ENCODE measurements at regions of chr1 and their contacts with region 1.

Region 1: DNA sequence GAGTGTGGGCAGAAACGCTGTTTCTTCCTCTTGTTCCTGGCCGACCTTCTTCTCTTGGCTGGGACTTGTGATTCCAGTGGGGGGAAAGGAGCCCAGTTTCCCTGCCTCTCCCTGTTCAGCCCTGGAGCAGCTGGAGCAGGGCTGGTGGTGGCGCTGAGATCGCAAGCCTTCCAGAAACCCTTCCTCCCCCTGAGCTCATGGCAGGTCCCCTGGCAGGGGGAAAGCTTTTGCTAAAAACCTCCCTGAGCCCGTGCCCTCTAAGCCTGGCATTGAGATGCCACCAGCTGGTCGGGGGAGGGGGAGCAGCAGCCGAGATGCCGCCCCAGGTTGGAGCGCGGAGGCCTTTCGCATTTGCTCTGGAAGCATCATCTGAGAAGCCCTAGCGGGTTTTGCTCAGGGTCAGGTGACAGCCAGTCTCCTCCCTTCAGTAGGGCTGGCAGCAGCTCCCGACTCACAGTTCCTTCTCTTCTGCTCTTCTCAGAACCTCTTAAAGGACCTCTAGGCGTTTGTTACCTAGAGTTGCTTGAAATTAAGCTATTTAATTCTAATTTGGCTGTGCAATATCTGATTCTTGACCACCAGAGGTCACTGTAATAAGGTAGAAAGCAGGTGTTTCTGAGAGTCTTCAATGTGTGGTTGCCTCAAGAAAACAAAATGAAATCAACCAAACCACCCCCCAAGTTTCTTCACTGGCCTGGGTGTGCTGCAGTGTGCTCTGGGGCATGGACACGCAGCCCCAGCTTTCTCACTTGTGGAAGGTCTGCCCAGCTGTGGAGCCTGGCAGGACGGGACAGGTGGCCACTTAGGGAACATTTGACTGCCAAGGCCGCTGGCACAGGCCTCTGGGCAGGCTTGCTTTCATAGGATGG is 257.3 kb downstream of the CAMTA1 start:
- DNase-seq: no peak
- H3K4me3 Mint-ChIP-seq: no peak overlapping the region
- H3K27ac Mint-ChIP-seq: no peak overlapping the region
- H3K4me1 Mint-ChIP-seq: no peaks in the 10 kb centered on the region
- H3K27me3 Mint-ChIP-seq: no peaks in the 10 kb centered on the region

Region 2: DNA sequence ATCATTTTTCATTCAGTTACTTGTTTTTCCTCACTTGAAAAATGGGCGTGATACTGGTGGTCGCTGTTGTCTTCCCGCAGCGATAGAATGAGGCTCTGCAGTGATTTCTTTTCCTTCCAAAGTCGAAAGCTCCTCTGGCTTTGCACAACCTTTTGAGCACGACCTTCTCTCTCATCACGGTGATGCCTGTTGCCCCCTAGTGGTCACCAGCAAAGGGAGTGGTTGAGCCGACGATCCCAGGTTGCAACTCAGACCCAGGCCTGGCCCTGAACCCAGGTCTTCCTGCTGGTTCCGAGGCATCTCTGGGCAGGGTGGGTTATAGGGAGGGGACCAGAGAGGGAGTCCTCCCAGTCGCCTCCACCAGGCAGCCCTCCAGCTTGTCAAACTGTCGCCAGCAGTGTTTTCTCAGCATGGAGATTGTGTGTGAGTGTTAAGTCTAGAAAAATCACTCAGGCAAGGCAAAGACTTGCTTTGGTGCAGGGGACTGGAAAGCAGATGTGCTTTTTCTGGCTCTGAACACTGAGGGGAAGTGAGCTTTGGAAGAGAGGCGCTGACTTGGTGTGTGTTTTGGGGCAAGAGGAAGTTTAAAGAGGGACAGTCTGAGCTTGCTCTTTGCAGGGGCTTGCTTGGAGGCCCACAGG is 28.0 kb after region 1 on chr1:
- CTCF ChIA-PET with region 1: interaction called, 11 read pairs
- POLR2A ChIA-PET with region 1: no interaction called
- DNase-seq: peak; percentile 48
- H3K4me3 Mint-ChIP-seq: no peak overlapping the region
- H3K27ac Mint-ChIP-seq: no peak overlapping the region
- H3K4me1 Mint-ChIP-seq: no peaks in the 10 kb centered on the region
- H3K27me3 Mint-ChIP-seq: peaks cover 5% of the 10 kb centered on the region

Region 3: DNA sequence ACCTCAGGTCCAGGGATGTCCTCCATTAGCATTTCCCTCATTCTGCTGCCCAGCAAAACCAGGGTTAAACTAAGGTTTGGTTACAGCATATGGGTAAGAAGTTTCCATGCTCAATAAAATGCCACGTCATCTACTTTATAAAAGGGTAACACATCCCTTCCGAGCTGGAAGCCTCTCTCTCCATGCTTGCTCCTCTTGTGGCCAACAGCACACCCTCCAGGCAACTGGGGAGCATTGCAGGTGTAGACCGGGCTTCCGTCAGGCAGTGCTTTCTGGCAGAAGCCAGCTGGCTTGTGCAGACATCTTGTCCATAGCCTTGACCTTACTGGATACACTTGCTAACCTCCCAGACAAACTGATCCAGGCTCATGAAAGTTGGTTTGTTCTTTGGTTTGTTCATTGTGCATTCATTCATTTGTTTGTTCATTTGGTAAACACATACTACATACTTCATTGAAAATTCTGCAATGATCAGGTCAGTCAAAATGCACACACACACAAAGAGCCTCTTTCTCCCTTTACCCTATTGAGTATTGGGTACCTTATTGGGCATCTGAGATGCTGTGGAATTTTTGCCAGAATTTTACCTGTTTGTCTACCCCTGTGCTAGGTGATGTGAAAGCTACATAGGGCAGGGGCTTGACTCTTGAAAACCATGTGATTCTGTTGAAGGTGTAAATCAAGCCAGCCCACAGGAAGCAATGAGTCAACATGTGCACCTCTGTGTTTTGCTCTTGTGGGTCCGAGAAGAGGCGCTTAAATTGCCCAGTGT is 165.5 kb after region 1 on chr1:
- CTCF ChIA-PET with region 1: interaction called, 15 read pairs
- POLR2A ChIA-PET with region 1: no interaction called
- DNase-seq: peak; percentile 35
- H3K4me3 Mint-ChIP-seq: no peak overlapping the region
- H3K27ac Mint-ChIP-seq: no peak overlapping the region
- H3K4me1 Mint-ChIP-seq: no peaks in the 10 kb centered on the region
- H3K27me3 Mint-ChIP-seq: peaks cover 20% of the 10 kb centered on the region